CD4-positive, alpha-beta T cell (primary cell): ENCODE measurements at regions of chr3 and their contacts with region 1.

Region 1: DNA sequence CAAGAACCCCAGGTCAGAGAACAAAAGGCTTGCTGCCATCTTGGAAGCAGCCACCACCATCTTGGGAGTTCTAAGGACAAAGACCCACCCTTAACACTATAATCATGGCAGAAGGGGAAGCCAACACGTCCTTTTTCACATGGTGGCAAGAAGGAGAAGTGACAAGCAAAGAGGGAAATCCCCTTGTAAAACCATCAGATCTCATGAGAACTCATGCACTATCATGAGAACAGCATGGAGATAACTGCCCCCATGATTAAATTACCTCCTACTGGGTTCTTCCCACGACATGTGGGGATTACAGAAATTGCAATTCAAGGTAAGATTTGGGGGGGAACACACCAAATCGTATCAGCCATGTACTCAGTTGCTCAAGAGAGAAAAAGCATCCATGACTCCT is 21.1 kb upstream of the GBE1 start:
- DNase-seq: peak in 2 of 14 experiments; percentile 18 to 22
- ATAC-seq: no peak
- H3K4me3 ChIP-seq: no peak overlapping the region
- H3K4me3 Mint-ChIP-seq: no peak overlapping the region
- H3K27ac ChIP-seq: no peak overlapping the region
- H3K27ac Mint-ChIP-seq: no peak overlapping the region
- H3K4me1 ChIP-seq: no peaks in the 10 kb centered on the region
- H3K4me1 Mint-ChIP-seq: no peaks in the 10 kb centered on the region
- H3K27me3 ChIP-seq: no peaks in the 10 kb centered on the region
- H3K27me3 Mint-ChIP-seq: no peaks in the 10 kb centered on the region
- CTCF ChIP-seq: no peak

Region 2: DNA sequence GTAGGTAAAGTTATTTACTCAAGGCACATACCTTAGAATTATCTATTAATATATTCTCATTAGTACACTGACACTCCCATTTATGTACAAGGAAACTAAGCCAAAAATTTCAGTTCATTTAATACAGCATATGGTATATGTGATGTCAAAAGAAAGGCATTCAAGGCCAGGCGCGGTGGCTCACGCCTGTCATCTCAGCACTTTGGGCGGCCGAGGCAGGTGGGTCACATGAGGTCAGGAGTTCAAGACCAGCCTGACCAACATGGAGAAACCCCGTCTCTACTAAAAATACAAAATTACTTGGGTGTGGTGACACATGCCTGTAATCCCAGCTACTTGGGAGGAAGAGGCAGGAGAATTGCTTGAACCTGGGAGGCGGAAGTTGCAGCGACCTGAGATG is 456.3 kb before region 1 on chr3:
- CTCF ChIA-PET with region 1: no interaction called
- POLR2A ChIA-PET with region 1: no interaction called
- intact Hi-C with region 1: no loop called
- DNase-seq: no peak
- ATAC-seq: no peak
- H3K4me3 ChIP-seq: no peak overlapping the region
- H3K4me3 Mint-ChIP-seq: no peak overlapping the region
- H3K27ac ChIP-seq: no peak overlapping the region
- H3K27ac Mint-ChIP-seq: no peak overlapping the region
- H3K4me1 ChIP-seq: no peaks in the 10 kb centered on the region
- H3K4me1 Mint-ChIP-seq: no peaks in the 10 kb centered on the region
- H3K27me3 ChIP-seq: no peaks in the 10 kb centered on the region
- H3K27me3 Mint-ChIP-seq: no peaks in the 10 kb centered on the region
- CTCF ChIP-seq: no peak

Region 3: DNA sequence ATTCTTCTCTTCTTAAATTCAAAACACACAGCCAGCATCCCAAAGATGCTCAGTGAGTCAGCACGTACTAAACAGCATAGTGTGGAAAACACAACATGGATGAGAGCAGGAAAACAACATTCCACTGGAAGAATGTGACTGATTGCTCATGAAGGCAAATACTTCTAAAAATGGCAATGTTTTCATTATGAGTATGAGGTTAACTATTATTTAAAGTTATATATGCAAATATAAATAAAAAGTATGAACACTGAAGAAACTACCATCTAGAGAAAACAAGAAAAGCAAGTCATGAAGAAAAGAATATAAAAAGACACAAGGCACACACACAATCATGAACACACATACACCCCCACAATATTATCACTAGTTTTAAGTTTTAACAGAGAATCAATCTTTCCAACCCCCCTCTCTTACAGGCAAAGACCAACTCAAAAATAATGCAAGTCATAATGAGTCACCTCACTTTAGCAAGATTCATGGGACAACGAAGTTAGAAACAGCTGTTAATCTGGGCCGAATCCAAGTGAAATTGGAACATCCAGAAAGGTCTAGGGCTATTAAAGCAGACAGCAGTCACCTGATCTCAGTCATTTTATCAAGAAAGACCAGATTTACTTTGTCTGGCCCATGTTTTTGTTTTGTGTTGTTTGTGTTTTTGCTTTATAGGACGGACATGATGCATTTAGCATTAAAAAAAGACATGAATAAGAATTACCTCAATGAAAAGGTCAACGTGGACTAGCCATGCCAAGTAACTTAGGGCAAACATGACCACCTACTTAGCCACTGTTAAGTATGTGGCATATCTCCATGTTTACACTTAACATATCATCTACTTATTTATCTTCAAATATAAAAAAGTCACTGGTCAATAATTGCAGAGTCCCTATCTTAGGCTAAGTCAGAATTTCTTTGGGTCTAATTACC is 39.2 kb before region 1 on chr3:
- CTCF ChIA-PET with region 1: no interaction called
- POLR2A ChIA-PET with region 1: no interaction called
- intact Hi-C with region 1: loop called in 1 of 2 experiments (anchors 5 kb)
- DNase-seq: no peak
- ATAC-seq: no peak
- H3K4me3 ChIP-seq: no peak overlapping the region
- H3K4me3 Mint-ChIP-seq: no peak overlapping the region
- H3K27ac ChIP-seq: no peak overlapping the region
- H3K27ac Mint-ChIP-seq: no peak overlapping the region
- H3K4me1 ChIP-seq: no peaks in the 10 kb centered on the region
- H3K4me1 Mint-ChIP-seq: no peaks in the 10 kb centered on the region
- H3K27me3 ChIP-seq: no peaks in the 10 kb centered on the region
- H3K27me3 Mint-ChIP-seq: no peaks in the 10 kb centered on the region
- CTCF ChIP-seq: no peak